Activated B cell treated with CpG ODN at 0.5 μM for 24 hours (primary cell): ENCODE measurements at regions of chr20 and their contacts with region 1.

Region 1: DNA sequence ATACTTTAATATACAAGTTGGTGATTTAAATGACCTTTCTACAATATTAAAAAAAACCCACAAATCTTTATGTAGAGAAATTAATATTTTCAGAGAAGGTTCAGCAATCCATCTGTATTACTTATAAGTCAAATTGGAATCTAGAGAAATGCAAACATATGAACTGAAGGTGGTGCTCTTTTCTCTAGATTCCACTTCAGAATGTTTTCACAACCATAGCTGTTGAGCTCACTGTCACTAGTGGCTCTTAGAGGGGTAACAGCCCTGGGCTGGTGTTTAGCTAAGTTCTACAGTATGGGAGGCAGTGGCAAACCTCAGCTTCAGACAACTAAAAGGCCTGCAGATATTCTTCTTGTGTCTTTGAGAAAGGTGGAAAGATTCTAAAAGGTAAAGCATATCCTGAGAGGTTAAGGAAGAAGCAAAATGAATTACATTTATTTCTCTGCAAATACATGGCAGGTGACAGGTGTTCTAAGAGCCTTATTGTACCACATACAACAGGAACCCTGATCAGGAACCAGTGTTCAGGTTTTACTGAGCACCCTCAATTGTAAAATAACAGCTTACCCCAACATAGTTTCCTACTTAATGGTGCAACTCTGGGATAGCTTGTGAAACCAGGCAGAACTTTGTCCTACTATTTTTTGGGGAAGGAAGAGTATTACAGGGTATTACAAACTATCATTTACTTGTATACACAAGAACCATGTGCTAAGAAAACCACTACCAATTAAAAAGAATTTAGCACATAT is 56.6 kb upstream of the SAMHD1 start:
- DNase-seq: no peak
- ATAC-seq: peak; percentile 26
- H3K4me3 Mint-ChIP-seq: peak overlapping the region; percentile 17
- H3K27ac Mint-ChIP-seq: peak overlapping the region; percentile 69
- H3K4me1 Mint-ChIP-seq: peaks cover 45% of the 10 kb centered on the region
- H3K27me3 Mint-ChIP-seq: no peaks in the 10 kb centered on the region
- CTCF ChIP-seq: no peak

Region 2: DNA sequence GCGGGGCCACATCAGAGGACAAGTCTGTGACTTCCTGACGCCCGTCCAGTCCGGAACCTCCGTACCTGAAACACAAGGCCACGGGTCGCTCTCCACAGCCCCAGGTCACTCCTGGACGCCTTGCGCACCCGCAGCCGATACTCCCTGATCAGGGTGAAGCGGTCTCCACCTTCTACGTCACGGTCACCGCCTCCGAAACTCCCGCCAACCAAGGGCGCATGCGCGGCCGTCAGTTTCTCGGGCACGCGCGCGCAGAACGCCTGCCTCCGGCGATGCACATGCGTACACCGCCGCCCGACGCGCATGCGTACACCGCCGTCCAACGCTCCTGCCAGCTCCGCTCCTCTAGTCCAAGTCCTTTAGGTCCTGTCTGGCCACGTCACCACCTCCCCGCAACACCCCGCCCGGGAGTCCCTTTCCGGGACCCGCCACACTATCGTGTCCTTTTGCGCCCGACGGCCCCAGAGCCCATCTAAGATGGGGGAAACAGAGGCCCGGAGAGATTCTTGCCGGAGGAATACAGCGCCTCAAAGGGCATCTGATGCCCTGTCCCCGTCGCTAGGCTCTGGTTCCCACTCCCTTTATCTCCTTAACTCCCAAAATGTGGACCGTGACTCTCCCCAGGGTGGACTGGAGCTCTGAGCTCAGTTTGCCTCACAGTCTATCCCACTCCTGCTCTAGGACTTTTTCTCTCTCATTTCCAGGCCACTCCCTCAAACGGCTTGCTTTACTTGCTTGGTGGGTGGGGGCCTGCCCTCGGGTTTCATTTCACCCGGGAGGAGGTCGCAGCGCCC is 234.3 kb before region 1 on chr20 and contains the start of gene DSN1:
- CTCF ChIA-PET with region 1: no interaction called
- POLR2A ChIA-PET with region 1: no interaction called
- intact Hi-C with region 1: no loop called
- DNase-seq: peak; percentile 99
- ATAC-seq: peak; percentile 87
- H3K4me3 Mint-ChIP-seq: peak within 1 kb of the TSS; percentile 91
- H3K27ac Mint-ChIP-seq: peak within 1 kb of the TSS; percentile 94
- H3K4me1 Mint-ChIP-seq: peaks cover 35% of the 10 kb centered on the region
- H3K27me3 Mint-ChIP-seq: peaks cover 2% of the 10 kb centered on the region
- CTCF ChIP-seq: no peak
- total RNA-seq, gene DSN1: 11.2 and 14.0 TPM in 2 replicates

Region 3: GRCh38 chr20:37081717-37082289 is 73.7 kb after region 1 on chr20:
- CTCF ChIA-PET with region 1: interaction called, 51 read pairs
- POLR2A ChIA-PET with region 1: interaction called, 8 read pairs
- intact Hi-C with region 1: loop called (anchors 1 kb)
- DNase-seq: no peak
- ATAC-seq: peak; percentile 45
- H3K4me3 Mint-ChIP-seq: no peak overlapping the region
- H3K27ac Mint-ChIP-seq: no peak overlapping the region
- H3K4me1 Mint-ChIP-seq: peaks cover 2% of the 10 kb centered on the region
- H3K27me3 Mint-ChIP-seq: no peaks in the 10 kb centered on the region
- CTCF ChIP-seq: no peak

Region 4: GRCh38 chr20:37192137-37192854 is 184.2 kb after region 1 on chr20:
- CTCF ChIA-PET with region 1: interaction called, 11 read pairs
- POLR2A ChIA-PET with region 1: interaction called, 3 read pairs
- intact Hi-C with region 1: loop called (anchors 1 kb)
- DNase-seq: peak; percentile 46
- ATAC-seq: peak; percentile 84
- H3K4me3 Mint-ChIP-seq: no peak overlapping the region
- H3K27ac Mint-ChIP-seq: no peak overlapping the region
- H3K4me1 Mint-ChIP-seq: peaks cover 57% of the 10 kb centered on the region
- H3K27me3 Mint-ChIP-seq: no peaks in the 10 kb centered on the region
- CTCF ChIP-seq: peak; percentile 54

Region 5: GRCh38 chr20:37282556-37282955 is 274.5 kb after region 1 on chr20:
- CTCF ChIA-PET with region 1: no interaction called
- POLR2A ChIA-PET with region 1: no interaction called
- intact Hi-C with region 1: no loop called
- DNase-seq: no peak
- ATAC-seq: no peak
- H3K4me3 Mint-ChIP-seq: no peak overlapping the region
- H3K27ac Mint-ChIP-seq: no peak overlapping the region
- H3K4me1 Mint-ChIP-seq: peaks cover under 1% of the 10 kb centered on the region
- H3K27me3 Mint-ChIP-seq: no peaks in the 10 kb centered on the region
- CTCF ChIP-seq: no peak